ENCODE measurements at regions of chrX and their contacts with region 1.

Region 1: GRCh38 chrX:117274947-117275346 is 812.2 kb upstream of the CT83 start:
- DNase-seq: no peak
- H3K4me3 ChIP-seq: no peak overlapping the region
- H3K27ac ChIP-seq: no peak overlapping the region
- H3K4me1 ChIP-seq: no peaks in the 10 kb centered on the region
- H3K27me3 ChIP-seq: no peaks in the 10 kb centered on the region
- CTCF ChIP-seq: no peak

Region 2: GRCh38 chrX:117301086-117301485 is 26.1 kb after region 1 on chrX:
- CTCF ChIA-PET with region 1: no interaction called
- dilution Hi-C with region 1: no loop called
- in situ Hi-C with region 1: no loop called
- intact Hi-C with region 1: loop called (anchors 1 kb)
- DNase-seq: no peak
- H3K4me3 ChIP-seq: no peak overlapping the region
- H3K27ac ChIP-seq: no peak overlapping the region
- H3K4me1 ChIP-seq: no peaks in the 10 kb centered on the region
- H3K27me3 ChIP-seq: no peaks in the 10 kb centered on the region
- CTCF ChIP-seq: no peak

Region 3: DNA sequence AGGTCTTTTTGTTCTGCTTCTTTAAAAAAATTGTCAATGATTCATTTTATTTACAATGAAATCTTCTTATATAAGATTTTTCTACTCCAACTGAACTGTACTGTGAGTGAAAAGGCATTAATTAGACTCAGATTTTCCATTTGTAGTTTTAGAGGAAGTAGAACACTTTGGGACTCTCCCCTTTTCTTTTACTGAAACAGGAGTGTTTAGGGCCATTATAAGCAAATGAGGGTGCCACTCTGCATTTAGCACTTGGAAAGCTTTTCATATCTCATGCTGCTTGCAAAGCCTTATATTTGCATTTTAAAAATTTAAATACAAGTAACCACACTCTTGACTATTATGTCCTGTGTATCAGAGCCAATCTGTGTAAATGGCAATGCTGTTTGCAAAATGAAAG is 257.4 kb after region 1 on chrX:
- CTCF ChIA-PET with region 1: no interaction called
- dilution Hi-C with region 1: no loop called
- in situ Hi-C with region 1: no loop called
- intact Hi-C with region 1: no loop called
- DNase-seq: no peak
- H3K4me3 ChIP-seq: no peak overlapping the region
- H3K27ac ChIP-seq: no peak overlapping the region
- H3K4me1 ChIP-seq: no peaks in the 10 kb centered on the region
- H3K27me3 ChIP-seq: no peaks in the 10 kb centered on the region
- CTCF ChIP-seq: no peak

Measured in mammary epithelial cell (primary cell).